SK-N-SH (cell line): ENCODE measurements at regions of chr9 and their contacts with region 1.

Region 1: DNA sequence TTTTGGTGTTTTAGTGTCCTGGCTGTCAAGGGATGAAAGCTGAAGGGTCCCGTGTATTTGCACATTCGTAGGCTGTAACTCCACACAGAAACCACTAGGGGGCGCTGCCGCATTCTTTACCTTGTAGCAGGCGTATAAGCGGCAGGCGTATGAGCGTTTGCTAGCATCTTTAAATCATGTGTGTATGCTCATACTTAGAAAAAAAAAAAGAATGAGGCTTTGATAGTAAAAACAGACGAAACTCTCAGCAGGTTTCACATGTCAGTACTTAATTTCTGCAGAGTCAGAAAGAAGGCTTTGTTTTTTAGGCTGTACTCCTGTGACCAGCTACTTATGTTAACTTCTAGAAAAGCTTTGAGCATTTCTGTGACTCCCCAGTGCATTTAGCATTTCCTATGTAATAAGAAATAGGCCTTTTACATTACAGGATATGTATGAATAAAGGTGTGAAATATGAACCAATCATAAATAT is 218.8 kb upstream of the ADAMTSL1 start:
- DNase-seq: peak; percentile 68
- H3K4me3 ChIP-seq: no peak overlapping the region; a peak in 1 of 4 replicates
- H3K27ac ChIP-seq: peak overlapping the region; percentile 25 to 81; a peak in 3 of 4 replicates
- H3K4me1 ChIP-seq: peaks cover 2 to 4% of the 10 kb centered on the region in 2 experiments; a peak in 3 of 4 replicates
- H3K27me3 ChIP-seq: no peaks in the 10 kb centered on the region
- CTCF ChIP-seq: peak; percentile 96
- EP300 ChIP-seq: no peak
- RAD21 ChIP-seq: peak; percentile 96

Region 2: GRCh38 chr9:18037981-18038380 is 217.2 kb before region 1 on chr9:
- CTCF ChIA-PET with region 1: no interaction called
- POLR2A ChIA-PET with region 1: no interaction called
- DNase-seq: no peak
- H3K4me3 ChIP-seq: no peak overlapping the region
- H3K27ac ChIP-seq: no peak overlapping the region
- H3K4me1 ChIP-seq: no peaks in the 10 kb centered on the region
- H3K27me3 ChIP-seq: no peaks in the 10 kb centered on the region; the same call in 1 of the 2 replicates
- CTCF ChIP-seq: no peak
- EP300 ChIP-seq: no peak
- RAD21 ChIP-seq: no peak

Region 3: GRCh38 chr9:18060245-18060934 is 194.8 kb before region 1 on chr9:
- CTCF ChIA-PET with region 1: no interaction called
- POLR2A ChIA-PET with region 1: no interaction called
- DNase-seq: peak; percentile 4
- H3K4me3 ChIP-seq: no peak overlapping the region
- H3K27ac ChIP-seq: no peak overlapping the region
- H3K4me1 ChIP-seq: no peaks in the 10 kb centered on the region
- H3K27me3 ChIP-seq: peaks cover 6% of the 10 kb centered on the region; the same call in 1 of the 2 replicates
- CTCF ChIP-seq: peak; percentile 50
- EP300 ChIP-seq: no peak
- RAD21 ChIP-seq: no peak

Region 4: DNA sequence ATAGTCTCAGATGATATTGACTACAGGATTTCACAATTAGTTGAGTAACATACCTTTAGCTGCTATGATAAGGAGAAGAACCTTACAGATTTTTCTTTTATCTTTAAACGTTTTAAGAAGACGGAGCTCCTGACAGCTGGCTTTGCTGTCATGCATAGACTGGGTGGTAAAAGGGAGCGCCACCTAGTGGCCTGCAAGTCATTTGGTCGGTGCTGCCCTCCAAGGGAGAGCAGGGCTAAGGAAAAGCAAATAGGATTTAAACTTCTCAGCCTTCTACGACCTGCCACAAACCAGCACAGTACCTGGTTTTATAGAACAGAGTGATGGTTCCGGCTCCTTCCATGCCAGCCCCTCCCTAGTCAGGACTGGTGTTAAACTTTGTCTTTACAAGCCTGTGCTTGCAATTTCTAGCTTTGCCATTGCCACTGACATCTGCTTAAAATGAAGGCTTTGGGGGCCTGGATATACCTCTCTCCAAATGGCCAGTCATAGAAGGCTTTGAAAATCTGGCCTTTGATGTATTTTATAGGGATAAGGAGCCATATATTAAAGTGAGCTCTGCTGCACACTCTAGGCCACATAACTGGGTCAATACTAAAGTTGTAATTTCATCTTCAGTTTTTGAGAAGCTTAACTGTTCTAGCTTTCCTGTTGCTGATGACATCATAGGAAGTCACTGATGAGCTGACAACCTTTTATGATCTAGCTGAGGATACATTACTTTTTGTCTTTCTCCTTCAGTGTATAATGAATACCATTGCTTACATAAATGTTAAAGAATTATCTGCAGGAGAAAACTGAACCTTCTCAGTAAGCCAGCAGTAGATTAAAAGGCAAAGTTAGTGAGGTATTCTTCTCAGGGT is 187.7 kb after region 1 on chr9:
- CTCF ChIA-PET with region 1: interaction called, 27 read pairs
- POLR2A ChIA-PET with region 1: no interaction called
- DNase-seq: peak; percentile 62
- H3K4me3 ChIP-seq: peak overlapping the region in 1 of 2 experiments; percentile 31; a peak in 1 of 4 replicates
- H3K27ac ChIP-seq: no peak overlapping the region
- H3K4me1 ChIP-seq: peaks cover 11 to 12% of the 10 kb centered on the region in 2 experiments
- H3K27me3 ChIP-seq: no peaks in the 10 kb centered on the region
- CTCF ChIP-seq: peak; percentile 97
- EP300 ChIP-seq: no peak
- RAD21 ChIP-seq: peak; percentile 74

Region 5: GRCh38 chr9:18811171-18811570 is 556.0 kb after region 1 on chr9:
- CTCF ChIA-PET with region 1: interaction called, 12 read pairs
- POLR2A ChIA-PET with region 1: no interaction called
- DNase-seq: no peak
- H3K4me3 ChIP-seq: no peak overlapping the region
- H3K27ac ChIP-seq: no peak overlapping the region
- H3K4me1 ChIP-seq: no peaks in the 10 kb centered on the region
- H3K27me3 ChIP-seq: no peaks in the 10 kb centered on the region
- CTCF ChIP-seq: no peak
- EP300 ChIP-seq: no peak
- RAD21 ChIP-seq: no peak

Region 6: DNA sequence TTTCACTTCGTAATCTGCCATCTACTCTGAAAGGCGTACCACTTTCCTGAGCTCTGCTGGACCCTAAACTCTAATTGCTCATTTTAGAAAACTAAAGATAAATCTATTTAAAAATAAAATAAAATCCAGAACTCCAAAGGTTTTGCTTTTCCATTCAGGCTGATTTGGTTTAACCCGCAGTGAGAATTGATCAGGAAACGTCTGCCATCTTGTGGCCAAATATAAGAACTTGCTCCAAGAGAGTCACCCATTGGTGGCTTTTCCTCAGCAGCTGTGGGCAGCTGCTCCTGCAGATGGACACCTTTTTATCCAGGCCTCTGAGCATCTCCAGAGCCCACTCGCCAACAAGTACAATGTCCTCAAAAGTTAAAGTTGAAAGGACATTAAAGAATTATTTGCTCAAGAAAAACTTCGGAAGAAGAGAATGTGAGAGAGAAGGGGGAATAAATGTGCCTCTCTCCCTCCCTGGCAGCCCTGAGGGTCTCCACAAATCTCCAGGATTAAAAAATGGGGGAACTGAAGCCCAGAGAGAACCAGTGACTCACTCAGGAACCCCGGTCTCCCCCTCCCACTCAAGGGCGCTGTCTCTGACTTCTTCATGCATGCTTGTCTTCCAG is 773.7 kb after region 1 on chr9:
- CTCF ChIA-PET with region 1: interaction called, 110 read pairs
- POLR2A ChIA-PET with region 1: no interaction called
- DNase-seq: peak; percentile 81
- H3K4me3 ChIP-seq: peak overlapping the region in 1 of 2 experiments; percentile 8; a peak in 1 of 4 replicates
- H3K27ac ChIP-seq: no peak overlapping the region
- H3K4me1 ChIP-seq: no peaks in the 10 kb centered on the region; a peak in 1 of 4 replicates
- H3K27me3 ChIP-seq: no peaks in the 10 kb centered on the region
- CTCF ChIP-seq: peak; percentile 79
- EP300 ChIP-seq: no peak
- RAD21 ChIP-seq: peak; percentile 89